Activated CD4-positive, alpha-beta memory T cell treated with anti-CD3 and anti-CD28 coated beads for 36 hours (primary cell): ENCODE measurements at regions of chr10 and their contacts with region 1.

Region 1: GRCh38 chr10:72162978-72163377 is 52.8 kb upstream of the ANAPC16 start:
- DNase-seq: no peak
- H3K4me3 Mint-ChIP-seq: no peak overlapping the region
- H3K27ac Mint-ChIP-seq: peak overlapping the region; percentile 65
- H3K4me1 Mint-ChIP-seq: peaks cover 26% of the 10 kb centered on the region
- H3K27me3 Mint-ChIP-seq: no peaks in the 10 kb centered on the region

Region 2: GRCh38 chr10:72088889-72089575 is 73.9 kb before region 1 on chr10:
- CTCF ChIA-PET with region 1: no interaction called
- POLR2A ChIA-PET with region 1: no interaction called
- intact Hi-C with region 1: loop called (anchors 2 kb)
- DNase-seq: peak; percentile 76
- H3K4me3 Mint-ChIP-seq: peak overlapping the region; percentile 100
- H3K27ac Mint-ChIP-seq: peak overlapping the region; percentile 99
- H3K4me1 Mint-ChIP-seq: peaks cover 46% of the 10 kb centered on the region
- H3K27me3 Mint-ChIP-seq: no peaks in the 10 kb centered on the region

Region 3: GRCh38 chr10:72146071-72146470 is 16.9 kb before region 1 on chr10:
- CTCF ChIA-PET with region 1: no interaction called
- POLR2A ChIA-PET with region 1: no interaction called
- intact Hi-C with region 1: loop called (anchors 2 kb)
- DNase-seq: no peak
- H3K4me3 Mint-ChIP-seq: no peak overlapping the region
- H3K27ac Mint-ChIP-seq: no peak overlapping the region
- H3K4me1 Mint-ChIP-seq: peaks cover 14% of the 10 kb centered on the region
- H3K27me3 Mint-ChIP-seq: no peaks in the 10 kb centered on the region